ENCODE measurements at regions of chr5 and their contacts with region 1.

Region 1: GRCh38 chr5:176352121-176352736 is 9.3 kb downstream of the KIAA1191 start:
- DNase-seq: no peak
- ATAC-seq: no peak
- H3K4me3 Mint-ChIP-seq: no peak overlapping the region
- H3K27ac Mint-ChIP-seq: no peak overlapping the region
- H3K4me1 Mint-ChIP-seq: no peaks in the 10 kb centered on the region
- H3K27me3 Mint-ChIP-seq: no peaks in the 10 kb centered on the region
- CTCF ChIP-seq: no peak

Region 2: DNA sequence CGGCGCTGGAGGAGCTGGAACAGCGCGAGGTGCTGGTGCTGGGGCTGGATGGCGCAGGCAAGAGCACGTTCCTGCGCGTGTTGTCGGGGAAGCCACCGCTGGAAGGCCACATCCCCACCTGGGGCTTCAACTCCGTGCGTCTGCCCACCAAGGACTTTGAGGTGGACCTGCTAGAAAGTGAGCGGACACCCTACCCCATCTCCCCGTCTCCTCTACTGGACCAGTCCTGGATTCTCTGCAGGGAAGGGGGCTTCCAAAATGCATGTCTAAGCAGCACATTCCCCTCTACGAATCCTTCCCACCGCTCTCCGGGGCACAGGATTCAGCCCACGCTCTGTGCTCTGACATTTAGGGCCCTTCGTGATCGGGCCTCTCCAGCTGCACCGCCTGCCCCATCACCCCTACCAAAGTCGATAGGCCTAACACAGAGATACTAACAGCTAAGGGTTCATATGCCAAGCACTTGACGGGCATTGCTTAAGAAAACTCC is 14.2 kb after region 1 on chr5:
- CTCF ChIA-PET with region 1: no interaction called
- POLR2A ChIA-PET with region 1: no interaction called
- DNase-seq: no peak
- ATAC-seq: no peak
- H3K4me3 Mint-ChIP-seq: peak overlapping the region; percentile 64
- H3K27ac Mint-ChIP-seq: no peak overlapping the region
- H3K4me1 Mint-ChIP-seq: peaks cover 7% of the 10 kb centered on the region
- H3K27me3 Mint-ChIP-seq: peaks cover 59% of the 10 kb centered on the region
- CTCF ChIP-seq: no peak

Region 3: DNA sequence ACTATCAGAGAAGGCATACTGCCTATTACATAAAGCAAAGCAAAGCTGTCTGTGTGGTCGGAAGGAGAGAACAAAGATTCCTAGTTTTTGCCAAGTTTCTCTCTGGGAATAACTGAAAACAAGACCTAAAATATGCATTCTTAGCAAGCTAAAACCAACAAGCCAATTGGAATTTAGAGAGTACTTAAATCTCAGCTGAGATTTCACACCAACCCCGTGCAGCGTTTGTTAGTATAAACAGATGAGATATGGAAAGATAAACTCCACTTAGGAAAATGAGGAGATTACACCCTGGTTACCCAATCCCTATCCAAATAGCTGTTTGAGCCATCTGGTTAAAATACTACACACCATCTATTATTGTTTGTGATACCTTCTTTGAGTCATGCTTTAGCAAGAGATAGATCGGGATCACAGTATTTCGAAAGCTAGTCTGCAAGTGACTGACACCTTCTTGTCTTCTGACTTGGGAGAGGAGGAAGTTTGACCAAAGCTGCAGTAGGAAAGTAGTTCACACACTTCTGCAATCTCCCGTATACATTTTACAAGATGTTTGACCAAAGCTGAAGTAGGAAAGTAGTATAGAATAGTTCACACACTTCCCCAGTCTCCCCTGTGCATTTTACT is 114.1 kb after region 1 on chr5:
- CTCF ChIA-PET with region 1: no interaction called
- POLR2A ChIA-PET with region 1: interaction called, 10 read pairs
- DNase-seq: no peak
- ATAC-seq: no peak
- H3K4me3 Mint-ChIP-seq: no peak overlapping the region
- H3K27ac Mint-ChIP-seq: no peak overlapping the region; the same call in 1 of the 2 replicates
- H3K4me1 Mint-ChIP-seq: peaks cover 2% of the 10 kb centered on the region; the same call in 1 of the 2 replicates
- H3K27me3 Mint-ChIP-seq: no peaks in the 10 kb centered on the region
- CTCF ChIP-seq: no peak

Measured in WTC11 (cell line).